ENCODE measurements at regions of chr11 and their contacts with region 1.

Region 1: DNA sequence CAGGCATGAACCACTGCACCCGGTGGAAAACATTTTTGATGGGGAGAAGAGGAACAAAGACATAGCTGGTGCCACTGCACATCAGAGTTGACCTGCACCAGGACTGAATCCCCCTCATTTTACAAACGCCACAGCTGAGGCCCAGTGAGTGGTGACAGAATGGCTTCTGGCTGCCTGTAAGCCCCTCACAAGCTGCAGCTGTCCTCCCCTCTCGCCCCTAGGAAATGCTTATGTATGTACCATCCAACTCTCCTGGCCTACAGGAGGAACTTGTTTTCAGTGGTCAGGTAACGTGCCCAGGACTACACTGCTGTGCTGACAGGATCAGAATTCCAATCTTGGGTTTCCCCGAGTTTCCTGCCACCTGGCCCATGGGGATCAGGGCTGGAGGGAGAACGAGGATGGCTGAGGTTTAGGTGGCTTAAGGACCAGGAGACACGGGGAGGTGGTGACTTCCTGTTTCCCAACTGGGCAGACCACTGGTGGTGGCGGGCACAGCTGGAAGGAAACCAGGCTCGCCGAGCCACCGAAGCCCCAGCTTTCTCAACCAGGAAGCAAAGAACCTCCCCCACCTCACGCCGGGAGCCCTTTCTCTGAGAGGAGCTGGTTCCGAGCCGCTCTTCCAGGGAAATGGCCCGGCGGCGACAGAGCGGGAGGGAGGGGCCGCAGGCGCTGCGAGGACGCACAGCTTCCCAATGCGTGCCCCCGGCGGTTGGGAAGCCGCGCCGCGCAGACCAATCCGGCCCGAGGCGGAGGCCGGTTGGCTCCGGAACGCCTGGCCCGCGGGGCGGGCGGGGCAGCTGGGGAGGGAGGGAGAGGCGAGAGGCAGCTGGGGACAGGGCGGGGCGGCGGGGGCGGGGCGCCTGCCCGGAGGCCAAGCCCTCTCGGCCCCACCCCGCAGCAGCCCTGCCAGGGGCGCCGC is 1.0 kb upstream of the LRFN4 start:
- DNase-seq: peak; percentile 87 to 93
- ATAC-seq: peak; percentile 45 to 82
- H3K4me3 ChIP-seq: peak overlapping the region; percentile 74
- H3K27ac ChIP-seq: peak overlapping the region; percentile 93 to 97
- H3K4me1 ChIP-seq: peaks cover 34% of the 10 kb centered on the region
- CTCF ChIP-seq: no peak
- EP300 ChIP-seq: no peak
- POLR2A ChIP-seq: peak; percentile 43
- RAD21 ChIP-seq: peak in 1 of 2 experiments; percentile 28; a peak in 1 of 5 replicates

Region 2: DNA sequence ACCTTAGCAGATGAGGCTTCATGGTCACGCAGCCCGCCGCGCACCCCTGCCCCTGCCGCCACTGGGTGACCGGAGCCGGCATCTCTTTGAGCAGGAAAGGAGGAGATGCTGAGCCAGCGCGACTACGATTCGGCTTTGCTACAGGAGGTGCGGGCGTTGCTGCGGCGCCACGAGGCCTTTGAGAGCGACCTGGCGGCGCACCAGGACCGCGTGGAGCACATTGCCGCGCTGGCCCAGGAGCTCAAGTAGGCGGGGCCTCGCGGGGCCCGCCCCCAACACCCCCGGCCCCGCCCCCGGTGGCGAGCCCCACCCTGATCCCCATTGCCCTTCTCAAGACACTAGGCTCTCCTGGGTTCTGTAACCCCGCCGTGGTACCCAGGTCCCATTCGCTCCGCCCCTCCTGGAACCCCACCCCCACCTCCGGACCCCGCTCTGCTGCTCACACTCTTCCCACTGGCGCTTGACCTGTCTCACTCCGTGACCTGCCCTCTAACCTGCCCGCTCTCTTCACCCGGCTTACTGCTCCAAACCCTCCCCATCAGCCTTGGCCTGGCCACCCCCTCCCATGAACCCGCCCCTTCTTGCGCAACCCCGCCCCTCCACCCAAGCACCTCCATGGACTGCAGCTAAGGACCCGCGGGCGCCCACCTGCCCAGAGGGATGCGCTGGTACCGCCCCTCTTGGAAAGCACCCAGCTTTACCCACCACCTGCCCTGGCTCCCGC is 296.5 kb before region 1 on chr11:
- CTCF ChIA-PET with region 1: no interaction called
- POLR2A ChIA-PET with region 1: no interaction called
- DNase-seq: no peak
- ATAC-seq: peak in 1 of 2 experiments; percentile 7; a peak in 1 of 6 replicates
- H3K4me3 ChIP-seq: no peak overlapping the region
- H3K27ac ChIP-seq: no peak overlapping the region
- H3K4me1 ChIP-seq: no peaks in the 10 kb centered on the region
- CTCF ChIP-seq: no peak
- EP300 ChIP-seq: no peak
- POLR2A ChIP-seq: no peak
- RAD21 ChIP-seq: no peak

Region 3: DNA sequence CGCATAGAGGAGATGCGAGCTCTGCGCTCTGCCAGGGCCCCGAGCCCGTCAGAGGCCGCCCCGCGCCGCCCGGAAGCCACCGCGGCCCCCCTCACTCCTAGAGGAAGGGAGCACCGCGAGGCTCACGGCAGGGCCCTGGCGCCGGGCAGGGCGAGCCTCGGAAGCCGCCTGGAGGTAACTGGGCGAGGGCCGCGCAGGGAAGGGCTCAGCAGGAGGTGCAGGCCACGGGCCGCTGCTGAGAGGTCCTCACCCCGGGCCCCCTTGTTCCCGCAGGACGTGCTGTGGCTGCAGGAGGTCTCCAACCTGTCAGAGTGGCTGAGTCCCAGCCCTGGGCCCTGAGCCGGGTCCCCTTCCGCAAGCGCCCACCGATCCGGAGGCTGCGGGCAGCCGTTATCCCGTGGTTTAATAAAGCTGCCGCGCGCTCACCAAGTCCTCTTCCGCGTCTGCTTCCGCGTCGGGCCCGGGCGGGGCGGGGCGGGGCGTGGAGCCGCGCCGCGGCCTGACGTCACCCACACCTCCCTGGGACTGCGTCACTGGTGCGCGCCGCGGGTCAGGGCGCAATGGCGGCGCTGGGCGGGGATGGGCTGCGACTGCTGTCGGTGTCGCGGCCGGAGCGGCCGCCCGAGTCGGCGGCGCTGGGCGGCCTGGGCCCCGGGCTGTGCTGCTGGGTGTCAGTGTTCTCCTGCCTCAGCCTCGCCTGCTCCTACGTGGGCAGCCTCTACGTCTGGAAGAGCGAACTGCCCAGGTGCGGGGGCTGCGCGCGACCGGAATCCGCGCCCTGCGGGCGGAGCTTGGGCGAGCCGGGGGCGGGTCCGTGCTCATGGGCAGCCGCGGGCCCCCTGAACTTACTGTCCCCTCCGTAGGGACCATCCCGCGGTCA is 12.7 kb before region 1 on chr11 and contains the start of gene RCE1:
- CTCF ChIA-PET with region 1: interaction called, 11 read pairs
- POLR2A ChIA-PET with region 1: interaction called, 53 read pairs
- DNase-seq: peak; percentile 78 to 93
- ATAC-seq: peak; percentile 74 to 79
- H3K4me3 ChIP-seq: peak within 1 kb of the TSS; percentile 95
- H3K27ac ChIP-seq: peak within 1 kb of the TSS; percentile 98 to 99
- H3K4me1 ChIP-seq: peaks cover 45% of the 10 kb centered on the region
- CTCF ChIP-seq: no peak
- EP300 ChIP-seq: no peak
- POLR2A ChIP-seq: peak; percentile 81
- RAD21 ChIP-seq: peak in 1 of 2 experiments; percentile 31; a peak in 2 of 5 replicates
- polyA plus RNA-seq, gene RCE1: 20.3 and 22.1 TPM in 2 replicates

Measured in A549 (cell line).